ENCODE measurements at regions of chr10 and their contacts with region 1.

Region 1: GRCh38 chr10:6088721-6089390 is at the start of gene RBM17:
- DNase-seq: peak; percentile 98
- H3K4me3 ChIP-seq: peak within 1 kb of the TSS; percentile 93
- H3K27ac ChIP-seq: peak within 1 kb of the TSS; percentile 83
- H3K4me1 ChIP-seq: peaks cover 71% of the 10 kb centered on the region
- CTCF ChIP-seq: peak; percentile 100
- total RNA-seq, gene RBM17: 103 and 152 TPM in 2 replicates

Region 2: DNA sequence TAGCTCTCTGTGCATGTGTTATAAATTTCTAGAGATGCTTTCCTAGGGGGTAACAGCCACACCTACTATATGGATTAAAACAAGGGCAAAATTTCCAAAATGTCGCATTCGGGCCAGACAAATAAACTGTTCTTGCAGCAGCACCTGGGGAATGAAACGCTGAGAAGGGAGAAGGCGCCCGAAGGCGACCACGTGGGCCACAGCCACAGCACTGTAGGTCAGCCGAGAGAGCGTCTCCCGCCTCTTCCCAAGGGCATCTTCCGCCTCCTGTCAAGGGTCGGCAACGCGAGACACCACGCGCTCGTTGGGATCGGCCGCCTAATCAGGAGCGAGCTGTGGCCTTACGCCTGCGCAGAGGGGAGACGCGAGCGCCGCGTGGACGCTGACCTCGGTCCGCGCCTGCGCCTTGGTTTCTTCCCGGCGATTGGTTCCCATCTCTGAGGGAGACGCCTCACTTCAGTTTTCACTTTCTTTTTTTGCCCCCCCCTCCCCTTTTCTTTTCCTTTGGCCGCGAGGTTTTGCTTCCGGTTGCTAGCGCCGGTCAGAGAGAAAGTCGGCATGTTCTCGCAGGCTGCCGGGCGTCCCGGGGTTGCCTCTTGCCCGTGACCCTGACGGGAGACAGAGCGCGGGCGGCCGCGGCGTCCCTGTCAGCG is 404.4 kb before region 1 on chr10 and contains the start of gene TASOR2:
- CTCF ChIA-PET with region 1: no interaction called
- POLR2A ChIA-PET with region 1: no interaction called
- intact Hi-C with region 1: loop called (anchors 5 kb)
- DNase-seq: peak; percentile 97
- H3K4me3 ChIP-seq: peak within 1 kb of the TSS; percentile 81
- H3K27ac ChIP-seq: peak within 1 kb of the TSS; percentile 77
- H3K4me1 ChIP-seq: peaks cover 47% of the 10 kb centered on the region
- CTCF ChIP-seq: no peak
- total RNA-seq, gene TASOR2: 103 and 113 TPM in 2 replicates

Region 3: GRCh38 chr10:5800790-5801189 is 288.1 kb before region 1 on chr10:
- CTCF ChIA-PET with region 1: no interaction called
- POLR2A ChIA-PET with region 1: no interaction called
- intact Hi-C with region 1: no loop called
- DNase-seq: no peak
- H3K4me3 ChIP-seq: no peak overlapping the region
- H3K27ac ChIP-seq: no peak overlapping the region
- H3K4me1 ChIP-seq: peaks cover 16% of the 10 kb centered on the region
- CTCF ChIP-seq: no peak

Region 4: DNA sequence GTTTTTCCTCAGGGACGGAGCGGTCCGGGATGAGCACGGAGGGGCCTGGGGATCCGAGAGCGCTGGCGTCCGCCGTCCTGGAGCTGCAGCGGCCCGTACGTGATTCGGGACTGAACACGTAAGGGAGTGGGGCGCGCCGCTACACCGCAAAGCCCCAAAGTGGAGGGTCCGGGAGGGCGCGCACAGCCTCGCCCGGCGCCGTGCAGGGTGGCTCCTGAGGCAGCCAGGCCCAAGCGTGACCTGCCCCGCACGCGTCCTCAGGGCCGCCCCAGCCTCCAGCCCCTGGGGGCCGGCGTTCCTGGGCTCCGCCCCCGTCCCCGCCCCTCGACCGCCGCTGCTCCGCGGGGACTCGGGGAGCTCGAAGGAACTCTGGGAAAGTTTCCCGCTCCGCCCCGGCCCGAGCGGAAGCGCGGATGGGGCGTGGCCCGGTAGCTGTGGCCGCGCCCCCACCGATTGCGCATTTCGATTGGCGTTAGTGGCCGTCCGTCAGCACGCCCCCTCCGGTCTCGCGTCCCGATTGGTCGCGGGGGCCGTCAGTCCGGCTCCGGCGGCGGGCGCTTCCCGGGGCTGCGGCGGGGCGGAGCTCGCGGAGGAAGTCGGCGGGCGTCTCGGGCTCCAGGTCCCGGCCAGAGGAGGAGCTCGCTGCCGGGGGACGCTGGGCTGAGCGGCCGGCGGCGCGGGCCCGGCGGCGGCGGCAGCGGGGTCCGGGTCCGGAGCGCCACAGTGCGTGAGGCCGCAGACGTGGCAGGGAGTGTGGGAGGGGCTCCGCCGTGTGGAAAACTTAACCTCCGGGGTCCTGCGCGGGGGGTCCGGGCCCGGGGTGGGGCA is 199.0 kb before region 1 on chr10 and contains the starts of genes ANKRD16 and FBH1:
- CTCF ChIA-PET with region 1: no interaction called
- POLR2A ChIA-PET with region 1: no interaction called
- intact Hi-C with region 1: loop called (anchors 5 kb)
- DNase-seq: peak; percentile 99
- H3K4me3 ChIP-seq: peak within 1 kb of the TSS; percentile 88
- H3K27ac ChIP-seq: peak within 1 kb of the TSS; percentile 35
- H3K4me1 ChIP-seq: peaks cover 26% of the 10 kb centered on the region
- CTCF ChIP-seq: no peak
- total RNA-seq, gene ANKRD16: 7.9 and 15.2 TPM in 2 replicates
- total RNA-seq, gene FBH1: 61.9 and 65.6 TPM in 2 replicates

Region 5: DNA sequence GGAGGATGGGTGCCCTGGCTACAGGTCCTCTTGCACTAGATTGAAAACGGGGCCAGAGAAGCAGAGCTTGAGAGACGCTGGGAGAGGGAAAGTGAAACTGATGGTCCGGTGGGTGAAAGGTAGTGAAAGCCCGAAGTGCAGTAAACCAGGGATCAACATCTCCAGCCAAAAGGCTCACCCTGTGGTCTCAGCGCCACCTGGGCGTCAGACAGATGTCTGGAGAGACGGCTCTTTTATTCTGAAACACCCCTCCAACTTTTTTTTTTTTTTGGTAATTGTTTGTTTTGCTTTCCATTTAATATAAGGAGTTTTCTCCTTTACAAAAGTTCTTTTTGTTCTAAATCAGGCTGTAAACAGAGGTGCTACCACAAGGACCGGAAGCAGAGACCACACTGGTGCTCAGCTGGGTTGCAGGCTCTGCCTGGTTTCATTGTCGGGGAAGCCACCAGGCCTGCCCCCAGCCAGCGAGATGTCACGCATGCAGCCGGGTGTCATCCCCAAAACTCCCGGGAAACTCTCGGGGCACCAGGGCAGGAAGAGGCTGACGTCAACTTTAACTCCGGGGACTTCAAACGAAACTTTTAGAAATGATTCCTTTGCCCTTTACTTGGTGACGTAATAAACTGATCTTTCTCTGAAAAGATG is 37.9 kb before region 1 on chr10:
- CTCF ChIA-PET with region 1: interaction called, 5 read pairs
- POLR2A ChIA-PET with region 1: interaction called, 10 read pairs
- intact Hi-C with region 1: loop called (anchors 1 kb)
- DNase-seq: peak; percentile 90
- H3K4me3 ChIP-seq: peak overlapping the region; percentile 63
- H3K27ac ChIP-seq: peak overlapping the region; percentile 94
- H3K4me1 ChIP-seq: peaks cover 92% of the 10 kb centered on the region
- CTCF ChIP-seq: peak; percentile 78

Region 6: GRCh38 chr10:6101181-6101580 is 12.3 kb after region 1 on chr10:
- CTCF ChIA-PET with region 1: interaction called, 4 read pairs
- POLR2A ChIA-PET with region 1: interaction called, 3 read pairs
- intact Hi-C with region 1: loop called (anchors 1 kb)
- DNase-seq: peak; percentile 72
- H3K4me3 ChIP-seq: peak overlapping the region; percentile 47
- H3K27ac ChIP-seq: peak overlapping the region; percentile 51
- H3K4me1 ChIP-seq: peaks cover 25% of the 10 kb centered on the region
- CTCF ChIP-seq: no peak

Region 7: GRCh38 chr10:6171881-6172695 is 83.2 kb after region 1 on chr10:
- CTCF ChIA-PET with region 1: no interaction called
- POLR2A ChIA-PET with region 1: no interaction called
- intact Hi-C with region 1: no loop called
- DNase-seq: no peak
- H3K4me3 ChIP-seq: no peak overlapping the region
- H3K27ac ChIP-seq: no peak overlapping the region
- H3K4me1 ChIP-seq: no peaks in the 10 kb centered on the region
- CTCF ChIP-seq: no peak

Region 8: GRCh38 chr10:6228010-6228511 is 139.2 kb after region 1 on chr10:
- CTCF ChIA-PET with region 1: no interaction called
- POLR2A ChIA-PET with region 1: no interaction called
- intact Hi-C with region 1: no loop called
- DNase-seq: no peak
- H3K4me3 ChIP-seq: no peak overlapping the region
- H3K27ac ChIP-seq: no peak overlapping the region
- H3K4me1 ChIP-seq: no peaks in the 10 kb centered on the region
- CTCF ChIP-seq: no peak

Measured in OCI-LY7 (cell line).